HCT116 (cell line): ENCODE measurements at regions of chr1 and their contacts with region 1.

Region 1: GRCh38 chr1:225881969-225882693 is at the start of gene TMEM63A:
- DNase-seq: peak; percentile 64
- ATAC-seq: peak; percentile 79
- H3K4me3 ChIP-seq: peak within 1 kb of the TSS; percentile 80 to 83
- H3K27ac ChIP-seq: peak within 1 kb of the TSS; percentile 81
- H3K4me1 ChIP-seq: peaks cover 31 to 46% of the 10 kb centered on the region in 2 experiments
- H3K27me3 ChIP-seq: no peaks in the 10 kb centered on the region
- CTCF ChIP-seq: peak in 2 of 3 experiments; percentile 18 to 41; a peak in 3 of 6 replicates
- POLR2A ChIP-seq: peak; percentile 36
- RAD21 ChIP-seq: no peak
- total RNA-seq, gene TMEM63A: 24.4 TPM

Region 2: DNA sequence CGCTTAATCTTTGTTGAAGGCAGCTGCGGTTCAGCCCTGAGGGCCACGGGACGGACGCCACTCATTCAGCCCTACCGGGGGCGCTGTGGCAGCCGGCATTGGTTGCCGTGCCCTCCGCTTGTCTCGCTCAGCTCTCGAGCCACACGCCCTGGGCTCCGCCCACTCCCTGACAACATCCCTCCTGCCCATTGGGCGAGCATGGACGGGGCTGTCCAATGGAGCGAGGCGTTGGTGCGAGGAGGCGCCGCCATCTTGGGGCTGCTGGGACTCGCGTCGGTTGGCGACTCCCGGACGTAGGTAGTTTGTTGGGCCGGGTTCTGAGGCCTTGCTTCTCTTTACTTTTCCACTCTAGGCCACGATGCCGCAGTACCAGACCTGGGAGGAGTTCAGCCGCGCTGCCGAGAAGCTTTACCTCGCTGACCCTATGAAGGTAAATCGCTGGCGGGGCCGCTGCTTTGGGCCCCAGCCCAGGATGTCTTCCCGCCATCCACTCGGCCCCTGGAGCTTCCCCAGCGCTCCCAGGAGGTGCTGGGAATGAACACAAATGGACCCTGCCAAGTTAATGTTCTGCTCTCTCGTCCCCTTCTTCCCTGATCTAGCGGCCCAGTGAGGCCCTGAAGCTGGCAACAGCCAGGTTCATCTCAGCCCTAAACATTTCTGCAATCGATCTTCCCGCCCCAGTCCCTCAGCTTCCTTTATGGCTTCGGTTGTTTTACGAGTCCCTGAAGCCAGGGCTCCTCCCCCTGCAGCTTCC is 104.4 kb before region 1 on chr1 and contains the start of gene SRP9:
- CTCF ChIA-PET with region 1: interaction called, 4 read pairs
- POLR2A ChIA-PET with region 1: interaction called, 3 read pairs
- RAD21 ChIA-PET with region 1: interaction called in 1 of 2 experiments, 5 read pairs
- intact Hi-C with region 1: loop called (anchors 10 kb)
- DNase-seq: peak; percentile 97
- ATAC-seq: peak; percentile 96
- H3K4me3 ChIP-seq: peak within 1 kb of the TSS; percentile 87 to 95
- H3K27ac ChIP-seq: peak within 1 kb of the TSS; percentile 82
- H3K4me1 ChIP-seq: peaks cover 8 to 17% of the 10 kb centered on the region in 2 experiments; a peak in 3 of 4 replicates
- H3K27me3 ChIP-seq: no peaks in the 10 kb centered on the region
- CTCF ChIP-seq: peak; percentile 83 to 89 (median 88)
- POLR2A ChIP-seq: peak; percentile 50
- RAD21 ChIP-seq: peak; percentile 81
- total RNA-seq, gene SRP9: 220 TPM

Region 3: DNA sequence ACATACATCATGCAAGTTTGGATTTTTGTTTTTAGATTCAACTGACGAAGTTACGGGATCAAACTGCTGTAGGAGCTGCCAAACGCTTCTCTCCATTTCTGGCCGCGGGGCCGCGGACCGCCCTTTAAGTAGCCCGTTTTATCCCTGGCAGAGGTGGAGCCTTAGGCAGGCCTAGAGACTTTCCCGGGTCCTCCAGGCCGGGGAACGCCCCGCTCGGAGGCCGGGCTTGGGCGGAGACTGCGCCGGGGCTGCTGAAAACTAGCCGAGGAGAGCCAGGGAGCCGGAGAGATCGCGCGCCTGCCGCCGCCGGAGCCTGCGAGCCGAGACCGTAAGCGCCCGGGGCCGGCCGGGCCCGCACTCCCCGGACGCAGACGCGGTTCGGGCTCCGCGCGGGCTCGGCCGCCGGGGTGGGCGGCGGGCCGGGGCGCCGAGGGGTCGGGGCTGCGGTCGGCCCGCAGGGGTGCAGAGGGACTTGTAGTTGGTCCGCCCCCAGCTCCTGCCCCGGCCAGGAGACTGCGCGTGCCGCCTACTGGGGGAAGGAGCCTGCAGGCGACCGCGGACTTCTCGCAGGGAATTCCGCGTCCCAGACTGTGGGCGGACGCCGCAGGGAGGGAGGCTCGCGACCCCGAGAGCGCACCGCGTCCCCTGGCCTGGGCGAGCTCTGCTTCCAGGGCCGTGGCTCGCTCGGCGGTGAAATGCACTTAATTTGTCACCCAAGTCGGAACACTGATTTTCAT is 72.1 kb before region 1 on chr1 and contains the start of gene EPHX1:
- CTCF ChIA-PET with region 1: no interaction called
- POLR2A ChIA-PET with region 1: no interaction called
- RAD21 ChIA-PET with region 1: no interaction called
- intact Hi-C with region 1: loop called (anchors 5 kb)
- DNase-seq: peak; percentile 71
- ATAC-seq: peak; percentile 98
- H3K4me3 ChIP-seq: peak within 1 kb of the TSS; percentile 66 to 67
- H3K27ac ChIP-seq: peak within 1 kb of the TSS; percentile 69
- H3K4me1 ChIP-seq: peaks cover 13 to 25% of the 10 kb centered on the region in 2 experiments
- H3K27me3 ChIP-seq: no peaks in the 10 kb centered on the region
- CTCF ChIP-seq: peak in 1 of 3 experiments; percentile 32; a peak in 1 of 6 replicates
- POLR2A ChIP-seq: peak; percentile 94
- RAD21 ChIP-seq: peak; percentile 11; the same call in 1 of the 2 replicates
- total RNA-seq, gene EPHX1: 44.6 TPM

Region 4: GRCh38 chr1:225911191-225912130 is 29.3 kb after region 1 on chr1:
- CTCF ChIA-PET with region 1: interaction called, 10 read pairs
- POLR2A ChIA-PET with region 1: no interaction called
- RAD21 ChIA-PET with region 1: no interaction called
- intact Hi-C with region 1: no loop called
- DNase-seq: peak; percentile 34
- ATAC-seq: peak; percentile 96
- H3K4me3 ChIP-seq: peak overlapping the region in 1 of 2 experiments; percentile 38; a peak in 1 of 4 replicates
- H3K27ac ChIP-seq: no peak overlapping the region
- H3K4me1 ChIP-seq: peaks cover 0 to 11% of the 10 kb centered on the region in 2 experiments; a peak in 3 of 4 replicates
- H3K27me3 ChIP-seq: no peaks in the 10 kb centered on the region
- CTCF ChIP-seq: peak; percentile 90 to 99 (median 95)
- POLR2A ChIP-seq: no peak
- RAD21 ChIP-seq: peak; percentile 89